ENCODE measurements at regions of chr1 and their contacts with region 1.

Region 1: DNA sequence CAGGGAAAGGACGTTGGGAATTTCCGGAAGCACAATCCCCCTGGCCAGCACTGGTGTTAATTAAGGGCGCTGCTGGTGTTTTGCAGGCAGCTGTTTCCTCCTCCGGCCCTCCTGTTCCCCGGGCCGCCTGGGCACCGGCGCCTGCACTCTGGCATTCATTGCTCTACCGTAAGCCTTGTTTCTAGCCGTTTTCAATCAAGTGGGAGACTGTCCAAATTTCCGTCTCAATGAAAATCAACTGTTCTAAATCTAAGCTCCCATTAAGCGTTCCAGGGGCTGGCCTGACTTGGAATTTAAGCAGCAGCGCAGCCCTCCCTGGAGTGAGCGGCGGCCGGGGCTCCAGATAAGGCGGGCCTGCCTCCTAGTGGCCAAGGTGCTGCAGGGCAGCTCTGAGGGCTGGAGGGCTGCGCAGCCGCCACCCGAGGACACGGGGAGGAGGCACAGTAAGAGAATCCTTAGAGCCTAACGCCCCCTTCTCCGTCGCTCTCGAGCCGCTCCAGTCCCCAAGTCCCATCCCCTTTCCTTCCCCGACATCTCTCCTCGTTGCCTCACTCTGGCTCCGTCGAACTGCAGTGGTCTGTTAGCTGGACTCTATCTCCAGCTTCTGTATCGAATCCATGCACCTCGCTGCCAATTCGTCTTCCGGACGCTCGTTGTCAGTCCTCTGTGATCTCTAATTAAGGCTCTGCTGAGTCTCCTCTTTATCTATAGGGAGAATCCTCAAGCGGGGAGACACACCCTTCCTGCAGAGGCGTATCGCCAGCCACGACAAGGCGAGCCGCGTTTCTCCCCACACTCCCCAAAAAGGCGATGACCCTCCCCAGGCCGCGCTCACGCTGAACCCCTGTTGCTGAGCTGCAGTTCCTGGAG is 57.8 kb upstream of the LRRC8D start:
- DNase-seq: peak; percentile 82 to 85 (median 84)
- H3K4me3 ChIP-seq: peak overlapping the region; percentile 11 to 74
- H3K4me3 Mint-ChIP-seq: peak overlapping the region; percentile 88 to 97 (median 92)
- H3K27ac ChIP-seq: peak overlapping the region; percentile 62
- H3K27ac Mint-ChIP-seq: peak overlapping the region; percentile 80 to 97 (median 94)
- H3K4me1 ChIP-seq: peaks cover 53% of the 10 kb centered on the region
- H3K4me1 Mint-ChIP-seq: peaks cover 32 to 55% (median 46%) of the 10 kb centered on the region in 4 donors
- H3K27me3 ChIP-seq: no peaks in the 10 kb centered on the region
- H3K27me3 Mint-ChIP-seq: no peaks in the 10 kb centered on the region

Region 2: DNA sequence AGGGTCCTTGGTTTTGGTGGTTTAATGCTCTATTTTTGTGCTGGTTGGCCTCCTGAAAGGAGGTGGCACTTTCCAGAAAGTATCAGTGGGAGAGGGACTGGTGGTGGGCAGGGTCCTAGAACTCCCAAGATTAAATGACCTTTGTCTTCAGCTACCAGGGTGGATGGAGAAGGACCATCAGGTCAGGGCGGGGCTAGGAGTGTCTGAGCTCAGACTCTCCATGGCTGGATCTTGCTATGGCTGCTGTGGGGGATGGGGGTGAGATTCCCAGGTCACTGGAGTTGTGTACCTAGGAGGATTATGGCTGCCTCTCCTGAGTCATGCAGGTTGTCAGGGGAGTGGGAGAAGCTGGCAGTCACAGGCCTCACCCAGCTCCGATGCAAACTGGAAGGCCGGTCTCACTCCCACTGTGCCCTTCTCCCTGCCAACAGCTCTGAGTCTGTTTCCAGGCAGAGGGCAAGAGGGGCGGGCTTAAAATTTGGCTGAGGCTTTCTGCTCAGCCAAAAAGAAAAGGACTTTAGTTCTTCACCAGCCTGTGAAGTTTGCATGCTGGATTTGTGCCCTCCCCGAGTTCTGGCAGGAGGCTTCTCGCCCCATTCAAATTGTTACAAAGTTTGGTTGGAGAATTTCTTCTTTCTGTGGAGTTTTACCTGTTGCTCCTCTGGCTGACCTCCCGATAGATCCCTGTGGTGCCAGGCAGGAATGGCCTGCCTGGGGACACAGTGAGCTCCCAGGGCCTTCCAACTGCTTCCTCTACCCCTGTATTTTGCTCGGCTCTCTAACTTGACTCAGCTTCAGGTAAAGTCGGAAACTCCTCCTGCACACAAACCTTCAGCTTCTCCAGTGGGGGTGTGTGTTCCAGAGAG is 757.5 kb before region 1 on chr1:
- CTCF ChIA-PET with region 1: no interaction called
- POLR2A ChIA-PET with region 1: no interaction called
- intact Hi-C with region 1: no loop called
- DNase-seq: no peak
- H3K4me3 ChIP-seq: no peak overlapping the region
- H3K4me3 Mint-ChIP-seq: no peak overlapping the region
- H3K27ac ChIP-seq: no peak overlapping the region
- H3K27ac Mint-ChIP-seq: peak overlapping the region in 4 of 7 donors; percentile 14 to 66 (median 63)
- H3K4me1 ChIP-seq: peaks cover 22% of the 10 kb centered on the region
- H3K4me1 Mint-ChIP-seq: peaks cover 22 to 47% (median 34%) of the 10 kb centered on the region in 4 donors
- H3K27me3 ChIP-seq: no peaks in the 10 kb centered on the region
- H3K27me3 Mint-ChIP-seq: no peaks in the 10 kb centered on the region

Region 3: DNA sequence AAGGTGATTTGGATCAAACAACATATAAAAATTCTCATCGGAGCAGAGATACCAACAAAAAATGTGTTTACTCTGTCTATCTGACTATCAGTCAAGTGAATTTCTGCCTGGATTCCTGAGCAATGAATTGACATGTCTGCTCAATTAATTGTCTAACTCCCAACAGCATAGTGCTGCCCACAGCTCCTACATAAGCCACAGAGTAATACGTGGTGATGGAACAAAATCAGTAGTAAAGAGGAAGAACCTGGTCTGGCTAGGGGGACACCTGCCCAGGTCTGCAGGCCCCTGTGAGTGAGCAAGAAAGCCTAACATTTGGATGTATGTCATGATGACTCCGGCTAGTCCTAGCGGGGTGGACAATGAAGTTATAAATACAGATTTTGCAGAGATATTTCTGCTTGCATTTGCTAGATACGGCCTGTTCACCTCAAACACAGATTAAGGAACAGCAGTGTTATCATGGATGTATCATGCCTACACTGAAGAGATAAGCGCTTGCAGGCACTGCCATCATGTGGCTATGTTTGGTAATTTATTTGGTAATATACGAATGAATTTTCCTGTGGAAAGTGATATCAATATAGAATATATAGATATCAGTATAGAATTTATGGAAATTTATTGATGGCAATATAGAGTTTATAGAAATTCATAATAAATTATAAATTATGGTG is 308.0 kb before region 1 on chr1:
- CTCF ChIA-PET with region 1: no interaction called
- POLR2A ChIA-PET with region 1: no interaction called
- intact Hi-C with region 1: no loop called
- DNase-seq: peak; percentile 67 to 73 (median 69)
- H3K4me3 ChIP-seq: no peak overlapping the region
- H3K4me3 Mint-ChIP-seq: no peak overlapping the region
- H3K27ac ChIP-seq: no peak overlapping the region
- H3K27ac Mint-ChIP-seq: peak overlapping the region in 2 of 7 donors; percentile 48 to 68
- H3K4me1 ChIP-seq: peaks cover 11% of the 10 kb centered on the region
- H3K4me1 Mint-ChIP-seq: peaks cover 9 to 14% (median 12%) of the 10 kb centered on the region in 4 donors
- H3K27me3 ChIP-seq: no peaks in the 10 kb centered on the region
- H3K27me3 Mint-ChIP-seq: peaks cover 1 to 2% of the 10 kb centered on the region in 2 donors

Region 4: DNA sequence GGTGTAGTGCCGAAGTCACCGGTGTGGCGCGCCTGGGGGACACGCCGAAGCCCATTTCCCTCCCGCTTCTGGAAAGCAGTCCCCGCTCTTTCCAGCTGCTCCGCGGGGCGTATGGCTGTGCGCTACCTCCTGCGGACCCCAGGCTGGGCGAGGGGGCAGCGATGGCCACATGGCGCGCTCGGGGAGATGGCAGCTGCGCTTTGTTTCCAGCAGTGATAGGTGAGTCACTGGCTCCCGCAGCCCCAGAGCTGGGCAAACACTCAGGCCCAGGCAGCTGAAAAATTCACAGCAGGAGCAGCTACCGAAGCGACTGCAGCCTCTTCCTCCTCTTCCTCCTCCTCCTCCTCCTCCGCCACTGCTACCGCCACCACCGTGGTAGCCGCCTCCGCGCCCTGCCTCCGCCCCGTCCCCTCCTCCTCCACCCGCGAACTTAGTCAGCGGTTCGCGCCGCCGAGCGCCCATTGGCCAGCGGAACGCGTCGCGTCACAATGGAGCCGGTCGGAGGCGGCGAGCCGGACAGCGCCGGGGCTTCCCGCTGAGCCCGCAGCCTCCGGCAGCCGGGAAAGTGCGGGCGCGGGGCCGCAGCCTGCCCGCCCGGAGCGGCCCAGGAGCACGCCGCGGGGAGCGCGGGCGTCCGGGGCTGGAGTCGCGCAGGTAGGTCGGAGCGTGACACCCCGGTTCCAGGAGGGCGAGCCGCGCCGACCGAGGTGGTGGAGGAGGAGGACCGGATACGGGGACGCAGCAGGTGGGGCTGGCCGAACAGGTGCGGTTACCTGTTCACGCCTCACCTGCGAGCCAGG is 238.4 kb before region 1 on chr1 and contains the start of gene LRRC8B:
- CTCF ChIA-PET with region 1: interaction called, 53 read pairs
- POLR2A ChIA-PET with region 1: interaction called, 15 read pairs
- intact Hi-C with region 1: loop called (anchors 1 kb)
- DNase-seq: peak; percentile 85 to 90 (median 88)
- H3K4me3 ChIP-seq: peak within 1 kb of the TSS; percentile 91 to 93
- H3K4me3 Mint-ChIP-seq: peak within 1 kb of the TSS in 5 of 8 donors; percentile 82 to 97 (median 87)
- H3K27ac ChIP-seq: peak within 1 kb of the TSS; percentile 92
- H3K27ac Mint-ChIP-seq: peak within 1 kb of the TSS in 6 of 7 donors; percentile 91 to 98 (median 96)
- H3K4me1 ChIP-seq: peaks cover 50% of the 10 kb centered on the region
- H3K4me1 Mint-ChIP-seq: peaks cover 11 to 21% (median 14%) of the 10 kb centered on the region in 4 donors
- H3K27me3 ChIP-seq: no peaks in the 10 kb centered on the region
- H3K27me3 Mint-ChIP-seq: no peaks in the 10 kb centered on the region
- total RNA-seq, gene LRRC8B: 15.6 to 18.1 TPM

Region 5: GRCh38 chr1:89605692-89606091 is 157.3 kb before region 1 on chr1:
- CTCF ChIA-PET with region 1: interaction called, 267 read pairs
- POLR2A ChIA-PET with region 1: interaction called, 90 read pairs
- intact Hi-C with region 1: loop called (anchors 1 kb)
- DNase-seq: no peak
- H3K4me3 ChIP-seq: peak overlapping the region in 1 of 2 donors; percentile 0
- H3K4me3 Mint-ChIP-seq: peak overlapping the region in 6 of 8 donors; percentile 29 to 97 (median 64)
- H3K27ac ChIP-seq: peak overlapping the region; percentile 84
- H3K27ac Mint-ChIP-seq: peak overlapping the region; percentile 98 to 100 (median 99)
- H3K4me1 ChIP-seq: peaks cover 95% of the 10 kb centered on the region
- H3K4me1 Mint-ChIP-seq: peaks cover 73 to 98% (median 87%) of the 10 kb centered on the region in 4 donors
- H3K27me3 ChIP-seq: no peaks in the 10 kb centered on the region
- H3K27me3 Mint-ChIP-seq: no peaks in the 10 kb centered on the region

Region 6: DNA sequence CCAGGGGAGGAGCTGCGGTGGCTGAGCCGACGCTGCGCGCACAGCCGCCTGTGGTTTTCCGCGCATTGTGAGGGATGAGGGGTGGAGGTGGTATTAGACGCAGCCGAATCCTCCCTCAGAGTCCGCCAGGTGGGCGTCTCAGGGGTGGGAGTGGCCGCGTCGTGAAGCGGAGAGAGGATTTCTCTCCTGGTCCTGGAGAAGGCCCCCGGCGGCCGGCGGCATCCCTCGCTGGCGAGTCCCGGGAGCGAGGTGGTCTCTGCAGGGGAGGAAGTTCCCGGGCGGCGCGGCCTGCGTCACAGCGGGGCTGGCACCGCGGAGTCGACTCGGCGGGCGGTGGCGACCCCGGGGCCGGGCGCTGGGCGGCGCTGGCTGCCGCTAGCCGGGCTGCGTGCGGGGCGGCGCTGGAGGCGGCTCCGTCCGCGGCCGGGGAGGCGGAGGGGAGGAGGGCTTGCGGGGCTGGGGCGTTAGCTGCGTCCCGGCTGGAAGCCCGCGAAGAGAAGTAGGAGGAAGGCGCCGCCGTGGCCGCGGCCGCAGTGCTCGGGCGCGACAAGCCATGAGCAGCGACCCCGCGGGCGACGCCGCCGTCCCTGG is 130.3 kb before region 1 on chr1 and contains the start of gene LRRC8C:
- CTCF ChIA-PET with region 1: interaction called, 629 read pairs
- POLR2A ChIA-PET with region 1: interaction called, 215 read pairs
- intact Hi-C with region 1: loop called (anchors 1 kb)
- DNase-seq: peak; percentile 90 to 95 (median 92)
- H3K4me3 ChIP-seq: peak within 1 kb of the TSS; percentile 73 to 89
- H3K4me3 Mint-ChIP-seq: peak within 1 kb of the TSS; percentile 96 to 99 (median 98)
- H3K27ac ChIP-seq: peak within 1 kb of the TSS; percentile 96
- H3K27ac Mint-ChIP-seq: peak within 1 kb of the TSS; percentile 96 to 99 (median 98)
- H3K4me1 ChIP-seq: peaks cover 76% of the 10 kb centered on the region
- H3K4me1 Mint-ChIP-seq: peaks cover 60 to 90% (median 74%) of the 10 kb centered on the region in 4 donors
- H3K27me3 ChIP-seq: no peaks in the 10 kb centered on the region
- H3K27me3 Mint-ChIP-seq: no peaks in the 10 kb centered on the region
- total RNA-seq, gene LRRC8C: 56.7 to 57.1 TPM

Region 7: DNA sequence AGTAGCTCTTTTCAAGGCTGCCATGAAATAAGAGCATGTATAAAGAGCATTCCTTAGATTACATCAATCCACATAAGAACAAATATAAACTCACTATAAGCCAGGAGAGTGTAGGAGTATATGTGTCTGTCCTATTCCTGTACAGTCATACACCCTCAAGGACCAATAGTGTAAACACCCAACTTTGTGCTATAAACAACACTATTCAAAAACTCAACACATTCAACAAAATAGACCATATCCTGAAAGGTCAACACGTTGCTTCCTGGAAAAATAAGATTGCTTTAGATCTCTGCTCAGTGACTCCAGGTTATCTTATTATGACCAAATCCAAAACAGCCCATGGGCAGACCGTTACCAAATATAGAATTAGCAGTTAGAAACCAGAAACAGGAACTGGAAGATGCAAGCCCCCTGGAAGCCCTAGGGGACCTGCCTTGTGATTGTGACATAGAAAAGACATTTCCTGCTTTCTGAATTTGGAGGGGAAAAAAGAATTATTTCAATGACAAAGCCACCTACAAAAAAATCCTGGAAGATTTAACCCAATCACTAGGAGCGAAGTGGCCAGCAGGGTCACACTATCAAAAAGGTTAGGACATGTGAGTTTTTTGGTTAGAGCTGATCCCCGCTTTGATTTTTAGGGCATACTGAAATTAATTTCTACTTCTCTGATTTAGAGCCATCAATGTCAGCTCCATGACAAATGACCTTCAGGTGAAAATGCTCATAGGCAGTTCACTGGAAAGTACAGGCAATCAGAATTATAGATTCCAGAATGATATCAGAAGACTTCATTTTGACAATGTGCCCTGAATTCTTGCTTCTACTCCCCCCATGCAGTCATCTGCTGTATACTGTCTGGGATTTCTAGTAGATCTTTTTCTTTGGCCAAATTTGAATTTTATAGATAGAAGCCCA is 70.2 kb before region 1 on chr1:
- CTCF ChIA-PET with region 1: interaction called, 23 read pairs
- POLR2A ChIA-PET with region 1: interaction called, 21 read pairs
- intact Hi-C with region 1: loop called (anchors 5 kb)
- DNase-seq: no peak
- H3K4me3 ChIP-seq: no peak overlapping the region
- H3K4me3 Mint-ChIP-seq: peak overlapping the region in 5 of 8 donors; percentile 20 to 57 (median 43)
- H3K27ac ChIP-seq: no peak overlapping the region
- H3K27ac Mint-ChIP-seq: peak overlapping the region; percentile 72 to 88 (median 75)
- H3K4me1 ChIP-seq: peaks cover 70% of the 10 kb centered on the region
- H3K4me1 Mint-ChIP-seq: peaks cover 67 to 93% (median 79%) of the 10 kb centered on the region in 4 donors
- H3K27me3 ChIP-seq: no peaks in the 10 kb centered on the region
- H3K27me3 Mint-ChIP-seq: no peaks in the 10 kb centered on the region

Region 8: GRCh38 chr1:89739013-89739843 is 23.8 kb before region 1 on chr1:
- CTCF ChIA-PET with region 1: interaction called, 15 read pairs
- POLR2A ChIA-PET with region 1: interaction called, 13 read pairs
- intact Hi-C with region 1: no loop called
- DNase-seq: peak in 1 of 5 donors; percentile 69
- H3K4me3 ChIP-seq: no peak overlapping the region
- H3K4me3 Mint-ChIP-seq: peak overlapping the region; percentile 46 to 82 (median 72)
- H3K27ac ChIP-seq: peak overlapping the region; percentile 41
- H3K27ac Mint-ChIP-seq: peak overlapping the region; percentile 88 to 96 (median 94)
- H3K4me1 ChIP-seq: peaks cover 51% of the 10 kb centered on the region
- H3K4me1 Mint-ChIP-seq: peaks cover 28 to 54% (median 43%) of the 10 kb centered on the region in 4 donors
- H3K27me3 ChIP-seq: no peaks in the 10 kb centered on the region
- H3K27me3 Mint-ChIP-seq: no peaks in the 10 kb centered on the region

Region 9: DNA sequence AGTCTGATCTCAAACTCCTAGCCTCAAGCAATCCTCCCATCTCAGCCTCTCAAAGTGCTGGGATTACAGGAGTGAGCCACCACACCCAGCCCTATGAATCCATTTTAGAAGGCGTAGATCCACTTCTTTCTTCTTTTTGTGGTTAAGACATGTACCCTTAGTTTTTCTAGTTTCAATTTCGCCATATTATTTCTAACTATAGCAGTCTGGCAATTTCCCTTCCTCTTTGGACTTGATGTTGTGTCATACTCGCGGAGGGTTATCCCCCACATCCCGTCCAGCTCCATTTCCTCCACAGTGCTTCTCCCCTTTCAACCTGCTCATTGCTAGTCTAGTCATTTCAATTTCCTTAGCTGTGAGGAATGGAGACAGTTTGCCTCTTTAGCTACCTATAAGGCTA is 52.6 kb after region 1 on chr1:
- CTCF ChIA-PET with region 1: no interaction called
- POLR2A ChIA-PET with region 1: no interaction called
- intact Hi-C with region 1: no loop called
- DNase-seq: no peak
- H3K4me3 ChIP-seq: no peak overlapping the region
- H3K4me3 Mint-ChIP-seq: peak overlapping the region in 1 of 8 donors; percentile 27
- H3K27ac ChIP-seq: no peak overlapping the region
- H3K27ac Mint-ChIP-seq: no peak overlapping the region
- H3K4me1 ChIP-seq: peaks cover 11% of the 10 kb centered on the region
- H3K4me1 Mint-ChIP-seq: peaks cover 12 to 14% (median 13%) of the 10 kb centered on the region in 4 donors
- H3K27me3 ChIP-seq: no peaks in the 10 kb centered on the region
- H3K27me3 Mint-ChIP-seq: peaks cover 4 to 9% of the 10 kb centered on the region in 2 donors